ENCODE measurements at regions of chr1 and their contacts with region 1.

Region 1: GRCh38 chr1:196660852-196661251 is 9.0 kb downstream of the CFH start:
- DNase-seq: peak in 4 of 9 donors; percentile 10 to 35 (median 14)
- ATAC-seq: peak; percentile 73
- H3K4me3 ChIP-seq: no peak overlapping the region
- H3K4me3 Mint-ChIP-seq: peak overlapping the region in 1 of 10 donors; percentile 12
- H3K27ac ChIP-seq: no peak overlapping the region
- H3K27ac Mint-ChIP-seq: no peak overlapping the region
- H3K4me1 ChIP-seq: no peaks in the 10 kb centered on the region
- H3K4me1 Mint-ChIP-seq: peaks cover 0 to 8% (median 0%) of the 10 kb centered on the region in 7 donors
- H3K27me3 ChIP-seq: no peaks in the 10 kb centered on the region
- H3K27me3 Mint-ChIP-seq: no peaks in the 10 kb centered on the region

Region 2: GRCh38 chr1:196148367-196148970 is 512.4 kb before region 1 on chr1:
- CTCF ChIA-PET with region 1: interaction called, 3 read pairs
- POLR2A ChIA-PET with region 1: no interaction called
- intact Hi-C with region 1: loop called in 1 of 2 experiments (anchors 1 kb)
- DNase-seq: peak in 1 of 9 donors; percentile 11
- ATAC-seq: no peak
- H3K4me3 ChIP-seq: no peak overlapping the region
- H3K4me3 Mint-ChIP-seq: no peak overlapping the region
- H3K27ac ChIP-seq: no peak overlapping the region
- H3K27ac Mint-ChIP-seq: no peak overlapping the region
- H3K4me1 ChIP-seq: no peaks in the 10 kb centered on the region
- H3K4me1 Mint-ChIP-seq: no peaks in the 10 kb centered on the region
- H3K27me3 ChIP-seq: no peaks in the 10 kb centered on the region
- H3K27me3 Mint-ChIP-seq: no peaks in the 10 kb centered on the region

Region 3: GRCh38 chr1:196355206-196355786 is 305.6 kb before region 1 on chr1:
- CTCF ChIA-PET with region 1: no interaction called
- POLR2A ChIA-PET with region 1: no interaction called
- intact Hi-C with region 1: loop called in 1 of 2 experiments (anchors 1 kb)
- DNase-seq: no peak
- ATAC-seq: no peak
- H3K4me3 ChIP-seq: no peak overlapping the region
- H3K4me3 Mint-ChIP-seq: no peak overlapping the region
- H3K27ac ChIP-seq: no peak overlapping the region
- H3K27ac Mint-ChIP-seq: no peak overlapping the region
- H3K4me1 ChIP-seq: no peaks in the 10 kb centered on the region
- H3K4me1 Mint-ChIP-seq: no peaks in the 10 kb centered on the region
- H3K27me3 ChIP-seq: no peaks in the 10 kb centered on the region
- H3K27me3 Mint-ChIP-seq: no peaks in the 10 kb centered on the region

Region 4: GRCh38 chr1:196372896-196373536 is 287.8 kb before region 1 on chr1:
- CTCF ChIA-PET with region 1: no interaction called
- POLR2A ChIA-PET with region 1: no interaction called
- intact Hi-C with region 1: loop called in 1 of 2 experiments (anchors 5 kb)
- DNase-seq: peak in 1 of 9 donors; percentile 3
- ATAC-seq: peak; percentile 60
- H3K4me3 ChIP-seq: no peak overlapping the region
- H3K4me3 Mint-ChIP-seq: no peak overlapping the region
- H3K27ac ChIP-seq: no peak overlapping the region
- H3K27ac Mint-ChIP-seq: no peak overlapping the region
- H3K4me1 ChIP-seq: no peaks in the 10 kb centered on the region
- H3K4me1 Mint-ChIP-seq: no peaks in the 10 kb centered on the region
- H3K27me3 ChIP-seq: no peaks in the 10 kb centered on the region
- H3K27me3 Mint-ChIP-seq: no peaks in the 10 kb centered on the region

Region 5: GRCh38 chr1:196608390-196609369 is 52.2 kb before region 1 on chr1 and contains the start of gene KCNT2:
- CTCF ChIA-PET with region 1: no interaction called
- POLR2A ChIA-PET with region 1: no interaction called
- intact Hi-C with region 1: no loop called
- DNase-seq: no peak
- ATAC-seq: peak; percentile 57
- H3K4me3 ChIP-seq: peak within 1 kb of the TSS; percentile 26
- H3K4me3 Mint-ChIP-seq: peak within 1 kb of the TSS in 5 of 10 donors; percentile 6 to 54 (median 48)
- H3K27ac ChIP-seq: no peak within 1 kb of the TSS
- H3K27ac Mint-ChIP-seq: no peak within 1 kb of the TSS
- H3K4me1 ChIP-seq: no peaks in the 10 kb centered on the region
- H3K4me1 Mint-ChIP-seq: peaks cover 0 to 7% (median 3%) of the 10 kb centered on the region in 7 donors
- H3K27me3 ChIP-seq: no peaks in the 10 kb centered on the region
- H3K27me3 Mint-ChIP-seq: peaks cover 28 to 42% (median 33%) of the 10 kb centered on the region in 5 donors
- total RNA-seq, gene KCNT2: not detected

Region 6: DNA sequence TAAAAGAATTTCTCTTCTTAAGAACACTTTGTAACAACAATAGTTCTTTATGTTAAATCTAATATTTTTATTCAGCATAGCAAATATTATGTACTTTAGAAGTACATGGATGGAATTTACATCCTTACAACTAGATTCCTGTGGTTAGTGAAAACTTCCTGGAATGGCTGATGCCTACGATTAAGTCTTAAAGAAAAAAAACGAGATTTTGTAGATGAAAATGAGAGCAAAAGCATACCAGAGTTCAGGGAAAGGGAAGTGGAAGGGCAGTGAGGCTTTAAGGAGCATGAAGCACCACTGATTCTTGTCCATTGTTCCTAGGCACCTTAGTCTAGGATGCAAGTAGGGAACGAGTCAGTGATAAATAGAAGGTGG is 17.6 kb after region 1 on chr1:
- CTCF ChIA-PET with region 1: no interaction called
- POLR2A ChIA-PET with region 1: no interaction called
- intact Hi-C with region 1: no loop called
- DNase-seq: no peak
- ATAC-seq: no peak
- H3K4me3 ChIP-seq: no peak overlapping the region
- H3K4me3 Mint-ChIP-seq: no peak overlapping the region
- H3K27ac ChIP-seq: no peak overlapping the region
- H3K27ac Mint-ChIP-seq: no peak overlapping the region
- H3K4me1 ChIP-seq: no peaks in the 10 kb centered on the region
- H3K4me1 Mint-ChIP-seq: no peaks in the 10 kb centered on the region
- H3K27me3 ChIP-seq: no peaks in the 10 kb centered on the region
- H3K27me3 Mint-ChIP-seq: peaks cover 0 to 6% (median 0%) of the 10 kb centered on the region in 5 donors

Region 7: GRCh38 chr1:197706601-197707000 is 1045.7 kb after region 1 on chr1:
- CTCF ChIA-PET with region 1: no interaction called
- POLR2A ChIA-PET with region 1: no interaction called
- intact Hi-C with region 1: no loop called
- DNase-seq: no peak
- ATAC-seq: no peak
- H3K4me3 ChIP-seq: no peak overlapping the region
- H3K4me3 Mint-ChIP-seq: no peak overlapping the region
- H3K27ac ChIP-seq: no peak overlapping the region
- H3K27ac Mint-ChIP-seq: no peak overlapping the region
- H3K4me1 ChIP-seq: no peaks in the 10 kb centered on the region
- H3K4me1 Mint-ChIP-seq: peaks cover 8 to 26% (median 12%) of the 10 kb centered on the region in 7 donors
- H3K27me3 ChIP-seq: no peaks in the 10 kb centered on the region
- H3K27me3 Mint-ChIP-seq: no peaks in the 10 kb centered on the region